ENCODE measurements at regions of chr11 and their contacts with region 1.

Region 1: DNA sequence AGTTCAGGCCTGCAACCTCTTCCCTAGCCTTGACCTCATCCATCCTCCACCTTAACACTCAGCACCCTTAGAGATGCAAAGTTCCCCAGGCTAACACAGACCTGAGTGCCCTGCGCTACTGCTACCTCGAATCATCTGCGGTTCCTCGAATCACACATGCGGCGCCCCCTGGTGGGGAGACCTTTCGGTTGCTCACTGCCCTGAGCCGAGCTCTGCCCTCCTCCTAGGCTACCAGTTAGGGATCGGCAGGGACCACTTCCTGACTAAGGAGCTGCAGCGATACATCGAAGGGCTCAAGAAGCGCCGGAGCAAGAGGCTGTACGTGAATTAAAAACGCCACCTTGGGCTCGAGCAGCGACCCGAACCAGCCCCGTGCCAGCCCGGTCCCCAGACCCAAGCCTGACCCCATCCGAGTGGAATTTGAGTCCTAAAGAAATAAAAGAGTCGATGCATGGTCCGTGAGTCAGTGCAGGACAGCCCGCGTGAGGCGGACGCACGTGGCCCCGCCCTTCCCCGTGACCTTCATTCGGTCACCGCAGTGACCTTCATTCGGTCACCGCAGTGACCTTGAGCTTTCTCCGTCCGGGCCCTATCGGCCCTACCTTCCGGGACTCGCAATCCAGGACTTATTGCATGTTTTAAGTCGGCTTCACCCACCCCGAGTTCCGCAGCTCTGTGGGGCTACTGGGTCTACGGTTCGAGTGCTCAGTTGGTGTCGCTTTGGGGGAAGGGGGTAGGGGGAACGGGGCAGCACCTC is 830 bp upstream of the ESRRA start:
- DNase-seq: peak; percentile 80
- ATAC-seq: peak; percentile 48
- H3K4me3 ChIP-seq: peak overlapping the region; percentile 59 to 70
- H3K27ac ChIP-seq: peak overlapping the region; percentile 99
- H3K4me1 ChIP-seq: peaks cover 12 to 55% of the 10 kb centered on the region in 2 experiments; a peak in 3 of 4 replicates
- H3K27me3 ChIP-seq: no peaks in the 10 kb centered on the region
- CTCF ChIP-seq: peak in 2 of 3 experiments; percentile 89 to 95; a peak in 4 of 6 replicates
- POLR2A ChIP-seq: peak; percentile 70
- RAD21 ChIP-seq: no peak

Region 2: DNA sequence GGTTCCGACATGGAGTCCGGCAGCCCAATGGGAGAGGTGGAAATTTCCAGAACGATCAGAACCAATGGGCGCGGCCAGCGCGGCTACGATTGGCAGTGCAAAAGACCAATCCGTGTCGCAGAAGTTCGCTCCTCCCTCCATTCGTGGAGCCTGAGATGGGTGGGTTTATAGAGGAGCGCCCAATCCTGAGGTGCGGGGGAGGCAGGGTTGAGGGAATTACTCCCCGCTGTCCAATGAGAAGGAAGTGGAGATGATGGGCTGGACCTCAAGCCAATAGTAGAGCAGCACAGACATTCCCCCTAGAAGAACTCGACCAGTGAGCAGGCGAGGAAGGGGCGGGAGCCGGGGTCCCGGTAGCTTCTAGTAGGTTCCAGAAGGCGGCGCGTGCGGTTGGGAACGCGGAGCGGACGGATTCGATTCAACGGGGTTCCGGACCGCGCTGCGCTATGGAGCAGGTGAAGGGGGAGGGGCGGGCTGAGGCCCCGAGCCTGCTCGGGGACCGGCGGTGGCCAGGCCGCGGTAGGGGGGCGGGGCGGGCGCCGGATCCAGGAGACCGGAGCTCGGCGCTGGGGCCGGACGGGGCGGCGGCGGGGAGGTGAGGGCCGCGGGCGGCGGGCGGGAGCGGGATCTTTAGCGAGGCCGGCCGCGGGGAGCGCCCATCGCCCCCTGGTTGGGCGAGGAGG is 118.5 kb before region 1 on chr11 and contains the start of gene STIP1:
- CTCF ChIA-PET with region 1: interaction called, 4 read pairs
- POLR2A ChIA-PET with region 1: interaction called, 12 read pairs
- RAD21 ChIA-PET with region 1: no interaction called
- intact Hi-C with region 1: loop called (anchors 5 kb)
- DNase-seq: peak; percentile 100
- ATAC-seq: peak; percentile 87
- H3K4me3 ChIP-seq: peak within 1 kb of the TSS; percentile 81 to 88
- H3K27ac ChIP-seq: peak within 1 kb of the TSS; percentile 90
- H3K4me1 ChIP-seq: peaks cover 26 to 48% of the 10 kb centered on the region in 2 experiments
- H3K27me3 ChIP-seq: no peaks in the 10 kb centered on the region
- CTCF ChIP-seq: peak in 2 of 3 experiments; percentile 15 to 29; a peak in 1 of 6 replicates
- POLR2A ChIP-seq: peak; percentile 19
- RAD21 ChIP-seq: no peak
- total RNA-seq, gene STIP1: 336 TPM

Region 3: DNA sequence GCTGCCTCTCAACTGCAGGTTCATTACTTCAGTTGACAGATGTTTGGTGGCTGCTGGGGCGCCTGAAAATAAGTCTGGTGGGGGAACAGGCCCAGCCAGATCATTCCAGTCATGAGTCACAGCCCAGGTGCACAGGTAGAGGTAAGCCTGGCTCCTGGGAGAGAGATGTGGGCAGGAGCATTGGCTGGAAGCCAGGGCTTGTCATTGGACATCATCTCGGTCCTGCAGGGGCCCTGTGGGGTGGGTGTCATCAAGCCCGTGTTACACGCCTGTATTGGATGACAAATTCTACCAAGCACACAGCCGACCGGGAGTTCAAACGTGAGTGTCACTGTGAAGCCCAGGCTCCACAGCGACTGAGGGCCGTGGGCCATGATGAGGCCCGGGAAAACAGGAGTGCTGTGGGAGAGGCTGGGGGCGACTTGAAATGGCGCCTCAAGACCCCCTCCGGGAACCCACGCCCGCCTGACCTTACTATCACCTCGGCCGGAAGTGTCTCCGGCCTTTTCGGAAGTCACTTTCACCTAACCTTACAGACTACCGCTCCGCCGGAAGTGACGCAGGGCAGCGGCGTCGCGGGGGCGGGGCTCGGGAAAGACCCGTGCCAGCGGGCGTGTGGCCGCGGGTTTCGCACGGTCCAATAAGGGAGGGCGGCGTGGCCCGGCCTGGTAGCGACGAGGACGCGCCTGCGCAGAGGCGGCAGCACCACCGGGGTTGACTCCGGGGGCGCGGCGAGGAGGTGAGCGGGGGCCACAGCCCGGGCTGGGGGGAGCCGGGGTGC is 63.9 kb before region 1 on chr11 and contains the start of gene FKBP2:
- CTCF ChIA-PET with region 1: interaction called, 11 read pairs
- POLR2A ChIA-PET with region 1: interaction called, 6 read pairs
- RAD21 ChIA-PET with region 1: no interaction called
- intact Hi-C with region 1: loop called (anchors 2 kb)
- DNase-seq: peak; percentile 91
- ATAC-seq: peak; percentile 65
- H3K4me3 ChIP-seq: peak within 1 kb of the TSS; percentile 70 to 91
- H3K27ac ChIP-seq: peak within 1 kb of the TSS; percentile 96
- H3K4me1 ChIP-seq: peaks cover 32 to 66% of the 10 kb centered on the region in 2 experiments
- H3K27me3 ChIP-seq: no peaks in the 10 kb centered on the region
- CTCF ChIP-seq: no peak
- POLR2A ChIP-seq: peak; percentile 89
- RAD21 ChIP-seq: no peak
- total RNA-seq, gene FKBP2: 69.2 TPM

Region 4: GRCh38 chr11:64269380-64270234 is 34.9 kb before region 1 on chr11:
- CTCF ChIA-PET with region 1: interaction called, 8 read pairs
- POLR2A ChIA-PET with region 1: interaction called, 9 read pairs
- RAD21 ChIA-PET with region 1: interaction called in 1 of 2 experiments, 3 read pairs
- intact Hi-C with region 1: loop called (anchors 1 kb)
- DNase-seq: peak; percentile 99
- ATAC-seq: peak; percentile 83
- H3K4me3 ChIP-seq: peak overlapping the region; percentile 72 to 98
- H3K27ac ChIP-seq: peak overlapping the region; percentile 95
- H3K4me1 ChIP-seq: peaks cover 18 to 31% of the 10 kb centered on the region in 2 experiments; a peak in 3 of 4 replicates
- H3K27me3 ChIP-seq: no peaks in the 10 kb centered on the region
- CTCF ChIP-seq: no peak
- POLR2A ChIP-seq: peak; percentile 14
- RAD21 ChIP-seq: no peak

Region 5: GRCh38 chr11:64317957-64318693 is 13.6 kb after region 1 on chr11 and contains the start of gene PRDX5:
- CTCF ChIA-PET with region 1: interaction called, 54 read pairs
- POLR2A ChIA-PET with region 1: interaction called, 30 read pairs
- RAD21 ChIA-PET with region 1: interaction called, 4 to 6 read pairs
- intact Hi-C with region 1: no loop called
- DNase-seq: peak; percentile 94
- ATAC-seq: peak; percentile 82
- H3K4me3 ChIP-seq: peak within 1 kb of the TSS; percentile 80 to 84
- H3K27ac ChIP-seq: peak within 1 kb of the TSS; percentile 83
- H3K4me1 ChIP-seq: peaks cover 22 to 63% of the 10 kb centered on the region in 2 experiments
- H3K27me3 ChIP-seq: no peaks in the 10 kb centered on the region
- CTCF ChIP-seq: peak in 2 of 3 experiments; percentile 28 to 38; a peak in 3 of 6 replicates
- POLR2A ChIP-seq: no peak
- RAD21 ChIP-seq: no peak
- total RNA-seq, gene PRDX5: 267 TPM

Region 6: GRCh38 chr11:64341851-64342791 is 37.6 kb after region 1 on chr11:
- CTCF ChIA-PET with region 1: interaction called, 5 read pairs
- POLR2A ChIA-PET with region 1: interaction called, 3 read pairs
- RAD21 ChIA-PET with region 1: interaction called in 1 of 2 experiments, 5 read pairs
- intact Hi-C with region 1: loop called (anchors 5 kb)
- DNase-seq: peak; percentile 80
- ATAC-seq: peak; percentile 92
- H3K4me3 ChIP-seq: peak overlapping the region; percentile 43 to 61
- H3K27ac ChIP-seq: peak overlapping the region; percentile 81
- H3K4me1 ChIP-seq: peaks cover 14 to 35% of the 10 kb centered on the region in 2 experiments
- H3K27me3 ChIP-seq: no peaks in the 10 kb centered on the region
- CTCF ChIP-seq: peak in 1 of 3 experiments; percentile 51; a peak in 3 of 6 replicates
- POLR2A ChIP-seq: peak; percentile 58
- RAD21 ChIP-seq: no peak

Measured in HCT116 (cell line).